ENCODE measurements at regions of chr15 and their contacts with region 1.

Region 1: DNA sequence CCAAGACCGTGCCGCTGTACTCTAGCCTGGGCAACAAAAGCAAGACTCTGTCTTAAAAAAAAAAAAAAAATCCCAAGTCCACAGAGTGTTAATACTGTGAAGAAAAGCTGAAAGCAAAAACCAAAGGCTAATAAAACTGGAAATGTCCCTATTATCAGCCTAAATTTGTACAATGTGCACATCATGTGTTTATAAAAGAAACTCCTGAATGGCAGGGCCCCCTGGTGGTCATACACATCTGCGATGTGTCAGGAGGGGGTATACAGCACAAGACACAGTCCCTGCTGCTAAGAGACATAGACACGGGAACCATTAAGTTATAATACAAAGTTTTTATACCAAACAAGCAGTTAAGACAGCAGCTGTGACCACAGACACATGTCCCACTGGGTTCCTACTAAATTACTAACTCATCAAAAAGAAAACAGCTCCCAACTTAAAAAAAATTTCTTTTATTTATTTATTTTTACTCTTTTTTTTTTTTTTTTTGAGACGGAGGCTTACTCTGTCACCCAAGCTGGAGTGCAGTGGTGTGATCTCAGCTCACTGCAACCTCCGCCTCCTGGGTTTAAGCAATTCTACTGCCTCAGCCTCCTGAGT is 31.0 kb downstream of the IDH2 start:
- DNase-seq: peak; percentile 87
- ATAC-seq: peak; percentile 92
- H3K4me3 ChIP-seq: no peak overlapping the region
- H3K27ac ChIP-seq: no peak overlapping the region
- H3K4me1 ChIP-seq: no peaks in the 10 kb centered on the region
- H3K27me3 ChIP-seq: no peaks in the 10 kb centered on the region
- CTCF ChIP-seq: peak; percentile 87
- POLR2A ChIP-seq: no peak
- RAD21 ChIP-seq: peak; percentile 81

Region 2: GRCh38 chr15:89575146-89575655 is 496.1 kb before region 1 on chr15 and contains the start of gene TICRR:
- CTCF ChIA-PET with region 1: no interaction called
- POLR2A ChIA-PET with region 1: no interaction called
- dilution Hi-C with region 1: no loop called
- in situ Hi-C with region 1: no loop called
- intact Hi-C with region 1: no loop called
- DNase-seq: peak; percentile 100
- ATAC-seq: peak; percentile 97
- H3K4me3 ChIP-seq: peak within 1 kb of the TSS; percentile 50
- H3K27ac ChIP-seq: peak within 1 kb of the TSS; percentile 67
- H3K4me1 ChIP-seq: peaks cover 3% of the 10 kb centered on the region; the same call in 1 of the 2 replicates
- H3K27me3 ChIP-seq: peaks cover 6% of the 10 kb centered on the region
- CTCF ChIP-seq: no peak
- POLR2A ChIP-seq: no peak; the same call in 1 of the 2 replicates
- RAD21 ChIP-seq: no peak
- total RNA-seq, gene TICRR: 3.0 and 3.3 TPM in 2 replicates

Region 3: DNA sequence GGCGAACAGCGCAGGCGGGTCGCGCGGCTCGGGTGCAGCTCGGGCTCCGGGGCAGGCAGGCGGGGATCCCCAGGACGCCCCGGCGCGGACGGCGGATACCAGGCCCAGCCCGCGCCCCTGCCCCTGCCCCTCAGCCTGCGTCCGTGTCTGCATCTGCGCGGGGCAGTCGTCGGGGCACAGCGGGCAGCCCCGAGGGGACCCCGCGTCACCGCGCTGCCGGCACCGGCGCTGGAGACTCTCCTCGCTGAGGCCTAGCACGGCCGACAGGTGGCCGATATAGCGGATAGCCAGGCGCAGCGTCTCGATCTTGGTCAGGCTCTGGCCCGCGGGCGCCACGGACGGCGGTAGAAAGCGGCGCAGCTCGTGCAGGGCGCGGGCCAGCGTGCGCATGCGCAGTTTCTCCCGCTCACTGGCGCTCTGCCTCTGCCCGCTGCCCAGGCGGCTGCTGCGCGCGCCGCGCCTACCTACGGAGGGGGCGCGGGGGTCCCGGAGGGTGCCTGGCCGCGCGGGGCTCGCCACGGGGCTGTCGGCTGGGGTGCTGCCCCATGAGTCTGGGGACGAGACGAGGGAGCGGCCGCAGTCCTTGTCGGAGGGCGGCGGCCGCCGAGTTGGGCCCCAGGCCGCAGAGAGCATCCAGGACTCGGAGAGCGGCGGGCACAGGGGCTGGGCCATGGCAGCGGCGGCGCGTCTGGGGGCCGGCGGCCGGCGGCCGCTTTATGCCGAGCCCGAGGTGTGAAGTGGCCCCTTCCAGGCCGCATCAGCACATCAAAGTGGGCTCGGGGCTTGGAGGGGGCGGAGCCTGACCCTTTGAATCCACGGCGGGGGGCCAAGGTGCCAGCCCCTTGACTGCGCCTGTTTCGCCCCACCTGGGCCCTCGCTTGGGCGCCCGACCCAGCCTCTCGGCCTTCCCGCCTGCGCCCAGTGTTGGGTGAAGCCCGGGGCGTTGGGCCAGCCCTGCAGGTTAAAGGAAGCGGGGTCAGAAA is 320.5 kb before region 1 on chr15 and contains the start of gene MESP1:
- CTCF ChIA-PET with region 1: no interaction called
- POLR2A ChIA-PET with region 1: no interaction called
- dilution Hi-C with region 1: no loop called
- in situ Hi-C with region 1: loop called (anchors 10 kb)
- intact Hi-C with region 1: no loop called
- DNase-seq: peak; percentile 87
- ATAC-seq: peak; percentile 97
- H3K4me3 ChIP-seq: peak within 1 kb of the TSS; percentile 65
- H3K27ac ChIP-seq: peak within 1 kb of the TSS; percentile 19; the same call in 1 of the 2 replicates
- H3K4me1 ChIP-seq: peaks cover 2% of the 10 kb centered on the region; the same call in 1 of the 2 replicates
- H3K27me3 ChIP-seq: peaks cover 33% of the 10 kb centered on the region
- CTCF ChIP-seq: peak; percentile 89
- POLR2A ChIP-seq: no peak
- RAD21 ChIP-seq: peak; percentile 64
- total RNA-seq, gene MESP1: under 0.01 TPM in 1 of 2 replicates, not detected in the other

Region 4: DNA sequence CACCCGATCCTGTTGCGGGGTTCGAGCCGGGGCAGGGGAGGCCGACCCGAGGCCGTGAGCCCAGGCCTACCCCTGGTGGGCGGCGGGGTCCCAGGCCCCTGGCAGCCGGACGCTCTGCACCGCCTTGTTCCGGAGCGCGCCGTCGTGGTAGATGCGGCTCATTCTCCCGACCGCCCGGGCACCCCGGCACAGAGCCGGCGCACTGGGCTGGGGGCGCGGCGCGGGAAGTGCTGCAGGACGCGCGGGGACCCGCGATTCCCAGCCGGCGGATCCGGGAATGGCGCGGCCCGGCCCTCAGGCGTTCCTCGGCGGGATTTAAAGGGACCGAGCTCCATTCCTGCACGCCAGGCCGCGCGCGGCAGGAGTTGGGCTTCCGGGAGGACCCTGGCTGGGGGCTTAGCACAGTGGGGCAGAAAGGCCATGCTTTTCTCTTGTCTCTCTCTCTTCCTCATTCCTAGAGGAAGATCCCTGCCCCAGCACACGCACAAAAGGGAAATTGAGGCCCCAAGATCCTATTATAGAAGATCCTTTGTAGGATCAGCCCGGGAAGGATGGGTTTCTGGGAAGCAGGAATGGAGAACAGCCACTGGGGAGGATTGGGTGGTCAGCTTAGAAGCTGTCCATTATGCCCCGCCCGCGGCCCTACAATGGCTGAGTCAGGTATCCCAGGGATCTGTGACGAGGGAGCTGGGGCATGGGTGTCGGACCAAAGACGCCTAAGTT is 158.5 kb before region 1 on chr15 and contains the start of gene ARPIN:
- CTCF ChIA-PET with region 1: no interaction called
- POLR2A ChIA-PET with region 1: no interaction called
- dilution Hi-C with region 1: no loop called
- in situ Hi-C with region 1: no loop called
- intact Hi-C with region 1: loop called (anchors 5 kb)
- DNase-seq: peak; percentile 32
- ATAC-seq: peak; percentile 92
- H3K4me3 ChIP-seq: peak within 1 kb of the TSS; percentile 81
- H3K27ac ChIP-seq: peak within 1 kb of the TSS; percentile 70
- H3K4me1 ChIP-seq: peaks cover 2% of the 10 kb centered on the region; the same call in 1 of the 2 replicates
- H3K27me3 ChIP-seq: no peaks in the 10 kb centered on the region
- CTCF ChIP-seq: no peak
- POLR2A ChIP-seq: no peak
- RAD21 ChIP-seq: no peak
- total RNA-seq, gene ARPIN: 3.9 and 5.6 TPM in 2 replicates

Region 5: DNA sequence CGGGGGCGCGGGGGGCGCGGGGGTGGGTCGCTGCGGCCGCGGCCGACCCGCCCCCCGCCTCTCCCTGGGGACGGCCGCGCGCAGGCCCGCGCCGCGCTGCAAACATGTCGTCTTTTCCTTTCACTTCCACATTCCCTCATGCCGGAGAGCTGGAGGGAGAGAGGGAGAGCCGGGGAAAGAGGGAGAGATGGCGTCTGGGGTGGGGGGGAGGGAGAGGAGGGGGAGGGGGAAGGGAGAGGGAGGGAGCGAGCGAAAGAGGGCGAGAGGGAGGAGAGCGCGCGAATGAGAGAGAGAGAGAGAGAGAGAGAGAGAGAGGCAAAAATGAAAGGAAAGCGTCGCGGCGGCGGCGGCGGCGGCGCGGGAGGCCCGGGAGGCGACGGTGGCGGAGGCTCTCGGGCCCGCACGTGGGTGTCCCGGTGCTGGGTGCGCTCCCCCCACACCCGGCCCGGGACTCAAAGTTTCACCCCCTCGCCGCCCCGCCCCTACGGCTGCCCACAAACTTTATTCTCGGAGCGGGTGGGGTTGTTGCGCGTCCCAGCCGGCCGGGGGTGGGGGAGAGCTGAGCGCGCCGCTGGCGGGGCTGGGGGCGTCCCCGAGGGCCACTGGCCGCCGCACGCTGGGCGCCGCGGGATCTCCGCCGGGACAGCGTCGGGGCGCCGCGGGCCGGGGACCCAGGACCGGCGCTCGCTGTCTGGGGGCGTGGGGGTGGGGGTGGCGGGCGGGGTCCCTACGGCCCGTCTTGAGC is 69.5 kb before region 1 on chr15:
- CTCF ChIA-PET with region 1: no interaction called
- POLR2A ChIA-PET with region 1: no interaction called
- dilution Hi-C with region 1: no loop called
- in situ Hi-C with region 1: no loop called
- intact Hi-C with region 1: loop called (anchors 1 kb)
- DNase-seq: peak; percentile 58
- ATAC-seq: peak; percentile 33
- H3K4me3 ChIP-seq: peak overlapping the region; percentile 83
- H3K27ac ChIP-seq: peak overlapping the region; percentile 89
- H3K4me1 ChIP-seq: peaks cover 30% of the 10 kb centered on the region
- H3K27me3 ChIP-seq: no peaks in the 10 kb centered on the region
- CTCF ChIP-seq: no peak
- POLR2A ChIP-seq: 0 out of 2 replicates have a peak, but pooled peaks have one; percentile 30
- RAD21 ChIP-seq: no peak